ENCODE measurements at regions of chr2 and their contacts with region 1.

Region 1: DNA sequence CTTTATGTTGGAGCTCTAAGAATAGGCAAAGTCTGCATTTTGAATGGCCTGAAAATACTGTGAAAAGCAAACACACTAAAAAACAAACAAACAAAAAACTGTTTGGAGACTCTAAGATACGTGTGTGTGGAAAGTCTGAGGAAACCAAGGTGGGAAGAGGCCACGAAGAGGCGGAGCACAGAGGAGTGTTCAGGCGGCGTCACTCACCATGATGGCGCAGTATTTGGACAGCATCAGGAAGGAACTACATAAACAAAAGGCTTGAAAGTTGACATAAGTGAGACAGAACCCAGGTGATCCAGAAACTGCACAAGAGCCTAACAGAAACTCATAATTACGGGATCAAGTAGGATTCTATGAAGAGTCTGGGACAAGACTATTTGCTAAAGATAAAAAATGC is 50.8 kb upstream of the SOS1 start:
- DNase-seq: no peak
- ATAC-seq: no peak
- H3K4me3 ChIP-seq: no peak overlapping the region
- H3K4me3 Mint-ChIP-seq: no peak overlapping the region
- H3K27ac ChIP-seq: no peak overlapping the region
- H3K27ac Mint-ChIP-seq: no peak overlapping the region
- H3K4me1 ChIP-seq: no peaks in the 10 kb centered on the region
- H3K4me1 Mint-ChIP-seq: no peaks in the 10 kb centered on the region
- H3K27me3 ChIP-seq: no peaks in the 10 kb centered on the region
- H3K27me3 Mint-ChIP-seq: no peaks in the 10 kb centered on the region
- CTCF ChIP-seq: no peak

Region 2: GRCh38 chr2:39188960-39189494 is 17.4 kb after region 1 on chr2:
- CTCF ChIA-PET with region 1: no interaction called
- POLR2A ChIA-PET with region 1: no interaction called
- intact Hi-C with region 1: loop called in 1 of 2 experiments (anchors 2 kb)
- DNase-seq: no peak
- ATAC-seq: no peak
- H3K4me3 ChIP-seq: no peak overlapping the region
- H3K4me3 Mint-ChIP-seq: no peak overlapping the region
- H3K27ac ChIP-seq: no peak overlapping the region
- H3K27ac Mint-ChIP-seq: no peak overlapping the region
- H3K4me1 ChIP-seq: no peaks in the 10 kb centered on the region
- H3K4me1 Mint-ChIP-seq: no peaks in the 10 kb centered on the region
- H3K27me3 ChIP-seq: no peaks in the 10 kb centered on the region
- H3K27me3 Mint-ChIP-seq: no peaks in the 10 kb centered on the region
- CTCF ChIP-seq: no peak

Region 3: GRCh38 chr2:39202639-39203369 is 31.2 kb after region 1 on chr2:
- CTCF ChIA-PET with region 1: no interaction called
- POLR2A ChIA-PET with region 1: no interaction called
- intact Hi-C with region 1: loop called in 1 of 2 experiments (anchors 5 kb)
- DNase-seq: no peak
- ATAC-seq: no peak
- H3K4me3 ChIP-seq: no peak overlapping the region
- H3K4me3 Mint-ChIP-seq: no peak overlapping the region
- H3K27ac ChIP-seq: no peak overlapping the region
- H3K27ac Mint-ChIP-seq: no peak overlapping the region
- H3K4me1 ChIP-seq: no peaks in the 10 kb centered on the region
- H3K4me1 Mint-ChIP-seq: no peaks in the 10 kb centered on the region
- H3K27me3 ChIP-seq: no peaks in the 10 kb centered on the region
- H3K27me3 Mint-ChIP-seq: no peaks in the 10 kb centered on the region
- CTCF ChIP-seq: no peak